MCF 10A (cell line): ENCODE measurements at regions of chr3 and their contacts with region 1.

Region 1: GRCh38 chr3:128725932-128726690 is at the start of gene RAB7A:
- DNase-seq: peak; percentile 97
- H3K4me3 Mint-ChIP-seq: peak within 1 kb of the TSS; percentile 78
- H3K27ac Mint-ChIP-seq: peak within 1 kb of the TSS; percentile 90
- H3K4me1 Mint-ChIP-seq: peaks cover 16% of the 10 kb centered on the region
- H3K27me3 Mint-ChIP-seq: no peaks in the 10 kb centered on the region
- CTCF ChIP-seq: no peak
- total RNA-seq, gene RAB7A: 172 and 221 TPM in 2 replicates

Region 2: GRCh38 chr3:128650096-128651050 is 75.7 kb before region 1 on chr3 and contains the start of gene RPN1:
- CTCF ChIA-PET with region 1: no interaction called
- POLR2A ChIA-PET with region 1: interaction called, 21 read pairs
- intact Hi-C with region 1: no loop called
- DNase-seq: peak; percentile 94
- H3K4me3 Mint-ChIP-seq: peak within 1 kb of the TSS; percentile 80
- H3K27ac Mint-ChIP-seq: peak within 1 kb of the TSS; percentile 89
- H3K4me1 Mint-ChIP-seq: no peaks in the 10 kb centered on the region
- H3K27me3 Mint-ChIP-seq: no peaks in the 10 kb centered on the region
- CTCF ChIP-seq: no peak
- total RNA-seq, gene RPN1: 212 and 240 TPM in 2 replicates

Region 3: DNA sequence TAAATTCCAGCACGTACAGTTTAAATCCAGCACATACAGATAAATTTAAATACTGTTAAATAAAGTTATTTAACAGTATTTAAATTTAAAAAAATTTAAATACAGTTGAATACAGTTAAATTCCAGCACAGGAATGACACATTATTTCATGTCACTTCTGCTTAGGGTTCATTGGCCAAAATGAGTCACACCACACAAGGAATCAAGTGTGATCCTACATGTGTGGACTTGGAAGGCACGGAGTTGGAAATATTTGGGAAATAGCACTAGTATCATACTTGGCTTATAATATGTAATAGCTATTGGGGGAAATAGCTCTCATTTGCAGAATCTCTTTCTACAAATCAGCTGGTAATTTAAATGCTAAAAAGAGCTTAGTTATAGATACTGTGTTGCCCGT is 10.5 kb after region 1 on chr3:
- CTCF ChIA-PET with region 1: no interaction called
- POLR2A ChIA-PET with region 1: interaction called, 45 read pairs
- intact Hi-C with region 1: no loop called
- DNase-seq: peak; percentile 30
- H3K4me3 Mint-ChIP-seq: no peak overlapping the region
- H3K27ac Mint-ChIP-seq: no peak overlapping the region
- H3K4me1 Mint-ChIP-seq: peaks cover 25% of the 10 kb centered on the region
- H3K27me3 Mint-ChIP-seq: no peaks in the 10 kb centered on the region
- CTCF ChIP-seq: no peak

Region 4: DNA sequence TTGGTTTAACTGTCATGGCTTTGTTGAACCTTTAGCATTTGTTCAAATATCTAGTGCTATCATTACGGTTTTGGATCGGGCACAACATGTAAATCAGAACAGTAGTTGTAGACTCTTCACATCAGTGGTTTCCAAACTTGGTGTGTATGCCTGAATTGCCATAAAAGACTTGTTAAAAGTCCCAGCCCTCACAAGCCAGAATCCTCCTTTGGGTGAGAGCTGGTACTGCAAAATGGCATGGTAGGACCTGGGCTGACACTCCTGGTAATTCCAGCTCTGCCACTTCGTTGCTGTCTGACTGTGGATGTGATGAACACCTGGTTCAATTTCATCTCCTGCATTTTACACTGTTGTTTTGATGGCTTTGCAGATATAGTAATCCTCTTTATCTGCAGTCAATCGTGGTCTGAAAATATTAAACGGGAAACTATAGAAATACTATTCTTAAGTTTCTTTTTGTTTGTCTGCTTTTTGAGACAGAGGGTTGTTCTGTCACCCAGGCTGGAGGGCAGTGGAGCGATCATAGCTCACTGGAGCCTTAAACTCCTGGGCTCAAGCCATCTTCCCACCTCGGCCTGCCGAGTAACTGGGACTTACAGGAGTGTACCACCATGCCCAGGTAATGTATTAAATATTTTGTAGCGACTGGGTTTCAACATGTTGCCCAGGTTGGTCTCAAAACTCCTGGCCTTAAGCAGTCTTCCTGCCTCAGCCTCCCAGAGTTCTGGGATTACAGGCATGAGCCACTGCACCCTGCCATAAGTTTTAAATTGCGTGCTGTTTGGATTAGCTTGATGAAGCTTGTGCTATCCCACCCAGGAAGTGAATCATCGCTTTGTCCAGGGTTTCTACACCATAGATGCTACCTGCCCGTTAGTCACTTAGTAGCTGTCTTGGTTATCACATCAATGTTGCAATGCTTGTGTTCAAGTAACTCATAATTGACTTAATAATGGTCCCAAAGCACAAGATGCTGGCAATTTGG is 61.4 kb after region 1 on chr3:
- CTCF ChIA-PET with region 1: no interaction called
- POLR2A ChIA-PET with region 1: interaction called, 27 read pairs
- intact Hi-C with region 1: no loop called
- DNase-seq: peak; percentile 94
- H3K4me3 Mint-ChIP-seq: peak overlapping the region; percentile 5
- H3K27ac Mint-ChIP-seq: peak overlapping the region; percentile 80
- H3K4me1 Mint-ChIP-seq: peaks cover 42% of the 10 kb centered on the region
- H3K27me3 Mint-ChIP-seq: no peaks in the 10 kb centered on the region
- CTCF ChIP-seq: peak; percentile 36

Region 5: DNA sequence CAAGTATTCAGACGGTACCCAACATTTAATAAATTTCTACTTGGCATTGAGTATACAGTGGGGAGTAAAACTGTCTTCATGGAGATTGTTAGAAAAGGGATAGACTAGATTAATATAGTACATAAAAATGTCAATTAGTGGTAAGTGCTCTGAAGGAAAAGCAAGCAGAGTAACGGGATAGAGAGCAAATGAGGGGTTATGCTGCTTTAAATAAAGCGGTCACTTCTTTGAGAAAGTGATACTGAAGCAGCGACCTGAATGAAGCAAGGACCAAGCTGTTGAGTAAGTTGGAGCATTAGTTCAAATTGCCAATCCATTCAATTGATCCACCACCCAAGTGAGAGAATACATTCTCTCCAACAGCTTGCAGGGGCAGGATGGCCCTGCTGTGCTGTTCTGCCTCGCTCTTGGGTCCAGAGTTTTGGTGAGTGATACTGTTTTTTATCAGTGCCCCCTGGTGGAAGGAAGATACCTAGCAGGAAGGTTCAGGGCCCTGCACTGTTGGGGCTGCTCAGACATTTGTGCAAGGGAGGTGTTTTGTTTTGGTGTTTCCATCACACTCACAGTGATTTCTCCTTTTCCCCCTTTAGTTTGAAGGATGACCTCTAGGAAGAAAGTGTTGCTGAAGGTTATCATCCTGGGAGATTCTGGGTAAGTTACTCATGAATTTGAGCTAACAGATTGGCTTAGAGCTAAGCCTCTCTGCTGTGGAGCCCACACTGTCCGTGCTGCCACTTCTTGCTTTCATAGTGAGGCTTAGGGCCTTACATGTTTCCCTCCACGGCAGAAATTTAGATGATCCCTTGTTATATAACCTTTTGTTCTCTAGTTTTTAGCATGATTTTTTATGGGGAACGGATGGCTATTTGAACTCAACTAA is 68.9 kb after region 1 on chr3:
- CTCF ChIA-PET with region 1: interaction called, 3 read pairs
- POLR2A ChIA-PET with region 1: interaction called, 24 read pairs
- intact Hi-C with region 1: loop called (anchors 2 kb)
- DNase-seq: peak; percentile 78
- H3K4me3 Mint-ChIP-seq: no peak overlapping the region
- H3K27ac Mint-ChIP-seq: peak overlapping the region; percentile 10
- H3K4me1 Mint-ChIP-seq: peaks cover 17% of the 10 kb centered on the region
- H3K27me3 Mint-ChIP-seq: no peaks in the 10 kb centered on the region
- CTCF ChIP-seq: peak; percentile 78